B cell (primary cell): ENCODE measurements at regions of chr4 and their contacts with region 1.

Region 1: GRCh38 chr4:112284662-112285411 is 867 bp downstream of the TIFA start:
- DNase-seq: peak; percentile 57
- ATAC-seq: peak; percentile 15
- H3K4me3 ChIP-seq: peak overlapping the region; percentile 78 to 95 (median 89)
- H3K4me3 Mint-ChIP-seq: peak overlapping the region; percentile 97
- H3K27ac ChIP-seq: peak overlapping the region; percentile 86 to 95
- H3K27ac Mint-ChIP-seq: peak overlapping the region; percentile 94
- H3K4me1 ChIP-seq: peaks cover 67 to 75% of the 10 kb centered on the region in 2 donors
- H3K4me1 Mint-ChIP-seq: peaks cover 84% of the 10 kb centered on the region
- H3K27me3 ChIP-seq: no peaks in the 10 kb centered on the region
- H3K27me3 Mint-ChIP-seq: no peaks in the 10 kb centered on the region
- CTCF ChIP-seq: no peak

Region 2: DNA sequence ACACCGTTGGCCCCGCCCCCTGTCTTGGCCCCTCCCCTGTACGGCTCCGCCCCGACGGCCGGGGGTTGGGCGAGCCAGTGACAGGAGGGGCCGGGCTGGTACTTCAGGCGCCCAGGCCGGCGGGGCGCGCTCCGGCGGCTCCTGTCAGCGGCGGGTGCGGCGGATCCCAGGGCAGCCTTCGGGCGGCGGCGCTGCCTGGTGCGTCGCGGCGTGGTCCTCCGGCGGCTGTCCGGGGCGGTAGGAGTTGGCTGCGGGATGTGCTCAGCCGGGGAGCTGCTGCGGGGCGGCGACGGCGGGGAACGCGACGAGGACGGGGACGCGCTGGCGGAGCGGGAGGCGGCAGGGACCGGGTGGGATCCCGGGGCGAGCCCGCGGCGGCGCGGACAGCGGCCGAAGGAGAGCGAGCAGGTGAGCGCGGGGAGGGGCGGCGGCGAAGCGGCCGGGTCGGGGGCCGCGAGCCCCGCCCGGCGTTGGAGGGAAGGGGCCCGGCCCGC is 139.5 kb before region 1 on chr4 and contains the start of gene FAM241A:
- CTCF ChIA-PET with region 1: no interaction called
- POLR2A ChIA-PET with region 1: no interaction called
- intact Hi-C with region 1: loop called (anchors 1 kb)
- DNase-seq: peak; percentile 89
- ATAC-seq: peak; percentile 98
- H3K4me3 ChIP-seq: peak within 1 kb of the TSS; percentile 66 to 97 (median 77)
- H3K4me3 Mint-ChIP-seq: peak within 1 kb of the TSS; percentile 89
- H3K27ac ChIP-seq: peak within 1 kb of the TSS; percentile 51 to 84
- H3K27ac Mint-ChIP-seq: peak within 1 kb of the TSS; percentile 74
- H3K4me1 ChIP-seq: peaks cover 8 to 12% of the 10 kb centered on the region in 2 donors
- H3K4me1 Mint-ChIP-seq: peaks cover 16% of the 10 kb centered on the region
- H3K27me3 ChIP-seq: no peaks in the 10 kb centered on the region
- H3K27me3 Mint-ChIP-seq: no peaks in the 10 kb centered on the region
- CTCF ChIP-seq: no peak
- total RNA-seq, gene FAM241A: 0.79 and 0.95 TPM in 2 replicates

Region 3: DNA sequence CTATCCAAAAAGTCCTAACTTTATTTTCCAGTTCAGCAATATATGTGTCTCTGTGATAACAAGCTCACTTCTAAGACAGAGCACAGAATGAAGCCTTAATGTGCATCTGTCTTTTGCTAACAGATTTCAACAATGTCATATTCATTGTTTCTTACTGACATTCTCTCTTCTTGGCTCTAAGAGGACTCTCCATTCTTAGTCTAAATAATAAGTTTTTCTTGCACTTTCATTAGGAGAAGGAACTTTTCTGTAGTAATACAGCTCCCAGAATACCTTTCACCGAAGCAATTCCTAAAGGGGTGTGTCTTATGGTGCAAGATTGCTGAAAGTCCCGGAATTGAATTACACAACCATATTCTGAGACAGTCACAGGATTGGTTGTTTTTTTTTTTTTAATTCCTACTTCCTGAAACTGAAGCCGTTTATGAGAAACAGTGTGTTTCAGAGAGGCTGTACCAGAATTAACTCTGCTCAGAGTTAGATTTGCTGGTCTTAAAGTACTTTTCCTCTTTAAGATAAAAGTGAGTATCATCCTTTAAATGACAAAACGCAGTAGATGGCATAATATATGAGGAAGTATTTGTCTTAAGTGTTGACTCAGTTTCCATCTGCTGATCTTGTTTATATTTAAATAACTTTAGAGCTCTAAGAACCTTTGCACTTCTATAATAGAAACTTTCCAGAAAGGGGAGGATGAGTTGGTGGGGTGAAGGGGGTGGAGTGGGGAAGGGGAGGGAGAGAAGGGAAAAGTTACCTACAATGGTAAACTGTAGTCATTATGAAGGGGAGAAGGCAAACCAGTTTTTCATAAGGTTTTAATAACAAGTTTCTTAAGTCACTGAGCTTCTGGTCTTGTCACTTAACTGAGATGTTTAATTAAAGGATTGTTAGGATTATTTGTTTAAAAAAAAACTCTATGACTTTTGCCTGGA is 12.4 kb after region 1 on chr4 and contains the start of gene ALPK1:
- CTCF ChIA-PET with region 1: no interaction called
- POLR2A ChIA-PET with region 1: interaction called, 11 read pairs
- intact Hi-C with region 1: loop called (anchors 1 kb)
- DNase-seq: peak; percentile 77
- ATAC-seq: peak; percentile 95
- H3K4me3 ChIP-seq: peak within 1 kb of the TSS; percentile 26 to 74 (median 46)
- H3K4me3 Mint-ChIP-seq: peak within 1 kb of the TSS; percentile 90
- H3K27ac ChIP-seq: peak within 1 kb of the TSS in 1 of 2 donors; percentile 77
- H3K27ac Mint-ChIP-seq: peak within 1 kb of the TSS; percentile 82
- H3K4me1 ChIP-seq: peaks cover 16 to 19% of the 10 kb centered on the region in 2 donors
- H3K4me1 Mint-ChIP-seq: peaks cover 24% of the 10 kb centered on the region
- H3K27me3 ChIP-seq: no peaks in the 10 kb centered on the region
- H3K27me3 Mint-ChIP-seq: no peaks in the 10 kb centered on the region
- CTCF ChIP-seq: no peak
- total RNA-seq, gene ALPK1: 27.2 and 28.6 TPM in 2 replicates

Region 4: GRCh38 chr4:112312610-112313239 is 27.9 kb after region 1 on chr4:
- CTCF ChIA-PET with region 1: no interaction called
- POLR2A ChIA-PET with region 1: interaction called, 9 read pairs
- intact Hi-C with region 1: loop called (anchors 1 kb)
- DNase-seq: peak; percentile 48
- ATAC-seq: peak; percentile 75
- H3K4me3 ChIP-seq: peak overlapping the region; percentile 11 to 50 (median 25)
- H3K4me3 Mint-ChIP-seq: no peak overlapping the region
- H3K27ac ChIP-seq: peak overlapping the region; percentile 68 to 75
- H3K27ac Mint-ChIP-seq: no peak overlapping the region
- H3K4me1 ChIP-seq: peaks cover 17 to 26% of the 10 kb centered on the region in 2 donors
- H3K4me1 Mint-ChIP-seq: peaks cover 20% of the 10 kb centered on the region
- H3K27me3 ChIP-seq: no peaks in the 10 kb centered on the region
- H3K27me3 Mint-ChIP-seq: no peaks in the 10 kb centered on the region
- CTCF ChIP-seq: no peak

Region 5: GRCh38 chr4:112321776-112322684 is 37.2 kb after region 1 on chr4:
- CTCF ChIA-PET with region 1: interaction called, 65 read pairs
- POLR2A ChIA-PET with region 1: interaction called, 5 read pairs
- intact Hi-C with region 1: loop called (anchors 1 kb)
- DNase-seq: peak; percentile 83
- ATAC-seq: peak; percentile 73
- H3K4me3 ChIP-seq: peak overlapping the region in 1 of 5 experiments; percentile 44
- H3K4me3 Mint-ChIP-seq: no peak overlapping the region
- H3K27ac ChIP-seq: no peak overlapping the region
- H3K27ac Mint-ChIP-seq: no peak overlapping the region
- H3K4me1 ChIP-seq: peaks cover 0 to 8% of the 10 kb centered on the region in 2 donors
- H3K4me1 Mint-ChIP-seq: peaks cover 12% of the 10 kb centered on the region
- H3K27me3 ChIP-seq: no peaks in the 10 kb centered on the region
- H3K27me3 Mint-ChIP-seq: no peaks in the 10 kb centered on the region
- CTCF ChIP-seq: peak; percentile 99

Region 6: GRCh38 chr4:112636688-112637551 is 352.1 kb after region 1 on chr4 and contains the starts of genes LARP7 and ZGRF1:
- CTCF ChIA-PET with region 1: no interaction called
- POLR2A ChIA-PET with region 1: no interaction called
- intact Hi-C with region 1: loop called (anchors 2 kb)
- DNase-seq: peak; percentile 99
- ATAC-seq: peak; percentile 86
- H3K4me3 ChIP-seq: peak within 1 kb of the TSS; percentile 54 to 94 (median 74)
- H3K4me3 Mint-ChIP-seq: no peak within 1 kb of the TSS
- H3K27ac ChIP-seq: peak within 1 kb of the TSS; percentile 84 to 97
- H3K27ac Mint-ChIP-seq: no peak within 1 kb of the TSS
- H3K4me1 ChIP-seq: peaks cover 13 to 19% of the 10 kb centered on the region in 2 donors
- H3K4me1 Mint-ChIP-seq: peaks cover 22% of the 10 kb centered on the region
- H3K27me3 ChIP-seq: no peaks in the 10 kb centered on the region
- H3K27me3 Mint-ChIP-seq: no peaks in the 10 kb centered on the region
- CTCF ChIP-seq: peak; percentile 92
- total RNA-seq, gene LARP7: 57.4 and 62.2 TPM in 2 replicates
- total RNA-seq, gene ZGRF1: 13.0 and 18.6 TPM in 2 replicates

Region 7: DNA sequence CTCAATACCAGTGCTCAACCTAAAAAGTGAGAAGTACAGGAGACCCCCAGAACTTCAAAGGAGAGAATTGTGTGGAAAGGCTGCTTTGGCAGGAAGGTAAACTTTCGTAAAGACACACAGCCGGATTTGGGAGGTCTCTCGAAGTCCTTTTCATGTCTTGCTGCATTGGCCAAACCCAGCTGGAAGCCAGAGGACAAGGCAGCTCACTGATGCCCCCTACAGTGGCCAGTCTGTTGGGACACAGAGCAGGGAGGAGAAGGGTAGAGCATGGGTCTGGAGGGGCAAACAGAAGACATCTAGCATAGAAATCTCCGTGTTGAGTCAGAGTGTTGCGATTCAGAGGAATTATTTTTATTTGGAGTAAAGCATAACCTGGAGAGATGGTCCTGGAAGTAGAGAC is 963.5 kb after region 1 on chr4:
- CTCF ChIA-PET with region 1: no interaction called
- POLR2A ChIA-PET with region 1: no interaction called
- intact Hi-C with region 1: no loop called
- DNase-seq: no peak
- ATAC-seq: no peak
- H3K4me3 ChIP-seq: no peak overlapping the region
- H3K4me3 Mint-ChIP-seq: no peak overlapping the region
- H3K27ac ChIP-seq: no peak overlapping the region
- H3K27ac Mint-ChIP-seq: no peak overlapping the region
- H3K4me1 ChIP-seq: no peaks in the 10 kb centered on the region
- H3K4me1 Mint-ChIP-seq: no peaks in the 10 kb centered on the region
- H3K27me3 ChIP-seq: no peaks in the 10 kb centered on the region
- H3K27me3 Mint-ChIP-seq: no peaks in the 10 kb centered on the region
- CTCF ChIP-seq: no peak

Region 8: GRCh38 chr4:113564493-113564892 is 1279.7 kb after region 1 on chr4:
- CTCF ChIA-PET with region 1: no interaction called
- POLR2A ChIA-PET with region 1: no interaction called
- intact Hi-C with region 1: loop called (anchors 10 kb)
- DNase-seq: no peak
- ATAC-seq: peak; percentile 54
- H3K4me3 ChIP-seq: peak overlapping the region in 3 of 5 experiments; percentile 10 to 54 (median 19)
- H3K4me3 Mint-ChIP-seq: peak overlapping the region; percentile 87
- H3K27ac ChIP-seq: peak overlapping the region; percentile 74 to 79
- H3K27ac Mint-ChIP-seq: peak overlapping the region; percentile 98
- H3K4me1 ChIP-seq: peaks cover 60 to 88% of the 10 kb centered on the region in 2 donors
- H3K4me1 Mint-ChIP-seq: peaks cover 74% of the 10 kb centered on the region
- H3K27me3 ChIP-seq: no peaks in the 10 kb centered on the region
- H3K27me3 Mint-ChIP-seq: no peaks in the 10 kb centered on the region
- CTCF ChIP-seq: no peak